BJ (cell line): ENCODE measurements at regions of chr11 and their contacts with region 1.

Region 1: DNA sequence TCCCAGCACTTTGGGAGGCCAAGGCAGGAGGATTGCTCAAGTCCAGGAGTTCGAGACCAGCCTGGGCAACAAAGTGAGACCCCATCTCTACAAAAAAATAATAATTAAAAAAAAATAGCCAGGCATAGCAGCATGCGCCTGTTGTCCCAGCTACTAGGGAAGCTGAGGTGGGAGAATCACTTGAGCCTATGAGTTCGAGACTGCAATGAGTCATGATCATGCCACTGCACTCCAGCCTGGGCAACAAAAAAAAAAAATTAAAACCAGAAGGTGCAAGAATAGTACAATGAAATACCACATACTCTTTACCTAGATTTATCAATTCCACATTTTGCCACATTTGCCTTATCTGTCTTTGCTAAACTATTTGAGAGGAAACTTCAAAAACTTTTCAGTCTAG is 8.2 kb downstream of the DPF2 start:
- DNase-seq: no peak
- H3K4me3 ChIP-seq: no peak overlapping the region
- H3K27me3 ChIP-seq: no peaks in the 10 kb centered on the region
- CTCF ChIP-seq: no peak

Region 2: GRCh38 chr11:65290448-65291165 is 51.2 kb before region 1 on chr11:
- CTCF ChIA-PET with region 1: no interaction called
- POLR2A ChIA-PET with region 1: no interaction called
- DNase-seq: peak; percentile 98
- H3K4me3 ChIP-seq: no peak overlapping the region
- H3K27me3 ChIP-seq: no peaks in the 10 kb centered on the region
- CTCF ChIP-seq: no peak

Region 3: DNA sequence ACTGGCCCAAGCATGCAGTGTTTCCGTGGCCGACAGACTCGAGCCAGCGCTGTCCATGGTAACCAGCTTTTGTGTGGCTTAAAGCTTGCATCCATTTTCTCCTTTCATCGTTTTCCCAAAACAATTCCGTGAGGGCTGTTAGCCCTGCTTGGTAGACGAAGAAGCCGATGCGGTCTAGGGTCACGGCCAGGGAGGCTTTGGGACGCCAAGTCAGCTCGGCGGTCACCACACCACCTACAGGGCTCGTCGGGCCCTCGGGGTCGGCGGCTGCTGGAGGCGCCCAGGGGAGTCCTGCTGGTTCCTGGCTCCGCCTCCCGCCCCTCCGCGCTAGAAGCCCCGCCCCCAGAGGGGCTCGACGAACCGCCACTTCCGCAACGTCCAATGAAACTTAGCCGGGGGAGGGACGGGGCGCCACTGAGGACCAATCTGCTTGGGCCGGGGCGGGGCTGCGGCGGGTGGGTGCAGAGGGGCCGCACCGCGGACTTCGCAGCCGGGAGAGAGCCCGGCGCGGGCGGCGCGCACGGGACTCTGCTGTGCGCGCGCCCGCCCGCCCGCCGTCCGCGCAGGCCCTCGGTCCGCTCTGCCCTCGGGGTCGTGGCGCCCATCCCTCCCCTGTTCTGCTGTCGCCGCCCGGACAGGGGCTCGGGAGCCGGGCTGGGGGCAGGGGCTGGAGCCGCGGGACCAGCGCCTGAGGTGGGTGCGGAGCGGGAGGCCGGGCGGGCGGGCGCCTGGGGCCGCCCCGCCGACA is 12.6 kb after region 1 on chr11 and contains the start of gene TIGD3:
- CTCF ChIA-PET with region 1: interaction called, 12 read pairs
- POLR2A ChIA-PET with region 1: interaction called, 4 read pairs
- DNase-seq: peak; percentile 77
- H3K4me3 ChIP-seq: peak within 1 kb of the TSS; percentile 52
- H3K27me3 ChIP-seq: peaks cover 5% of the 10 kb centered on the region
- CTCF ChIP-seq: no peak
- polyA plus RNA-seq, gene TIGD3: 0.04 and 0.06 TPM in 2 replicates